IMR-90 (cell line): ENCODE measurements at regions of chr19 and their contacts with region 1.

Region 1: DNA sequence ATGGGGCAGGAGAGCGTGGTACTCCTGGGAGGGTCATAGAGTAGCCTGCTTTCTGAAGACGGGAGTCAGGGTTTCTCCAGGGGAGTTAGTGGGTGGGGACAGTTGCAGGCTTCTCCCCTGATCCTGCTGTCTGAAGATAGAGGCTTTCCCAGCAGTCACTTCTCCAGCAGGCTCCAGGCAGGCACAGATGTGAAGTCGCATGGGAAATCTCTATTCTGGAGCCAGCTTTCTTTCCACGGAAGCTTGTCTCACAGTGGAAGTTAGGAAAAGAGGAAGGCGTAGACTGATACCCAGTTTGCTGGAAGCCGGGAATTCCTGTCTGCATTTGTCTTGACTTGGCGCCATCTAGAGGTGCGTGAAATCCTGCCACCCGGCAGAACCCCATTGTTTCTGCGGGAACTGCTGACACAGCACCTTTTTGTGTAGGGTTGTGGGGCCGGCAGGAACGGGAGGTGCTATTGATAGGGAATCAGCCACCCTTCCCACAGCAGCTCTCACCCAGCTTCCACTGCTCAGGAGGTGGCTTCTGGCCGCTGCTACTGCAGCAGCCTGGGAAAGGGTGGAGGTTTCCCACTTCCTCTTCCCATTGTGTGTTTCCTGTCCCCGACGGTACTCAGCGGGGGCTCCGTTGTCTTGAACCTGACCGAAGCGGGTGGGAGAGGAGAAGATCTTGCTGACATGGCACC is 28.5 kb upstream of the NPAS1 start:
- DNase-seq: peak; percentile 81
- ATAC-seq: peak; percentile 95
- H3K4me3 ChIP-seq: no peak overlapping the region
- H3K27ac ChIP-seq: no peak overlapping the region
- H3K4me1 ChIP-seq: no peaks in the 10 kb centered on the region
- H3K27me3 ChIP-seq: no peaks in the 10 kb centered on the region
- CTCF ChIP-seq: peak; percentile 95
- POLR2A ChIP-seq: no peak
- RAD21 ChIP-seq: peak; percentile 98

Region 2: DNA sequence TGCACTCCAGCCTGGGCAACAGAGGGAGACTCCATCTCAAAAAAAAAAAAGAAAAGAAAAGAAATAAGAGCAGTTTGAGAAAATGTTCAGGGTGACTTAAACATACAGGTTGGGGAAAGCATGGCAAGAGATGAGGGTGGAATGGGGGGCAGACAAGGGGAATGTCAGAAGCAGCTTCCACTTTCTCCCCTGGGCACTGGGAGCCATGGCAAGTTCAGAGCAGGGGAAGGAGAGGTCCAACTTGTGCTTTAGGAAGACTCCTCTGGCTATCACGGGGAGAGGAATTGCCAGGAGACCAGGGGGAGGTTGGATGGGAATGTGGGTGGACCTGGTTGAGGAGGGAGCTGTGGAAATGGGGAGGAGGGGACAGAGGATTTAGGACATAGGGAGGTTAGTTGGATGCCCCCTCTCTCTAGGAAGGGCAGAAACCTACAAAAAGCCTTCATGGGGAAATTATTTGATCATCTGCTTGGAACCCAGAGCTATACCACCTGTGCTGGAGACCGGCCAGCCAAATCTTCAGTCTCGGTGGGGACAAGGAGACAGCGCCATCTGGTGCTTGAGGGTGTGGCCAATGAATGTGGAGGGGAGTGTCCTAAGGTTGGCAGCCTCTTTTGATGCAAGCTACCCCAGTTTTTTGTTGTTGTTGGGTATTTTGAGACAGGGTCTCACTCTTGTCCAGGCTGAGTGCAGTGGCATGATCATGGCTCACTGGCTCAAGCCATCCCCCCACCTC is 237.5 kb before region 1 on chr19:
- CTCF ChIA-PET with region 1: interaction called, 4 read pairs
- POLR2A ChIA-PET with region 1: no interaction called
- dilution Hi-C with region 1: no loop called
- in situ Hi-C with region 1: loop called (anchors 5 kb)
- intact Hi-C with region 1: loop called (anchors 2 kb)
- DNase-seq: no peak
- ATAC-seq: no peak
- H3K4me3 ChIP-seq: no peak overlapping the region
- H3K27ac ChIP-seq: no peak overlapping the region
- H3K4me1 ChIP-seq: peaks cover 8% of the 10 kb centered on the region
- H3K27me3 ChIP-seq: no peaks in the 10 kb centered on the region
- CTCF ChIP-seq: peak; percentile 40
- POLR2A ChIP-seq: no peak
- RAD21 ChIP-seq: peak; percentile 25; the same call in 1 of the 2 replicates

Region 3: GRCh38 chr19:46788262-46788967 is 202.7 kb before region 1 on chr19 and contains the start of gene SLC1A5:
- CTCF ChIA-PET with region 1: interaction called, 5 read pairs
- POLR2A ChIA-PET with region 1: no interaction called
- dilution Hi-C with region 1: no loop called
- in situ Hi-C with region 1: no loop called
- intact Hi-C with region 1: loop called (anchors 1 kb)
- DNase-seq: peak; percentile 96
- ATAC-seq: peak; percentile 76
- H3K4me3 ChIP-seq: peak within 1 kb of the TSS; percentile 97
- H3K27ac ChIP-seq: peak within 1 kb of the TSS; percentile 84
- H3K4me1 ChIP-seq: peaks cover 14% of the 10 kb centered on the region
- H3K27me3 ChIP-seq: no peaks in the 10 kb centered on the region
- CTCF ChIP-seq: no peak
- POLR2A ChIP-seq: peak; percentile 100
- RAD21 ChIP-seq: no peak
- total RNA-seq, gene SLC1A5: 105 and 142 TPM in 2 replicates

Region 4: DNA sequence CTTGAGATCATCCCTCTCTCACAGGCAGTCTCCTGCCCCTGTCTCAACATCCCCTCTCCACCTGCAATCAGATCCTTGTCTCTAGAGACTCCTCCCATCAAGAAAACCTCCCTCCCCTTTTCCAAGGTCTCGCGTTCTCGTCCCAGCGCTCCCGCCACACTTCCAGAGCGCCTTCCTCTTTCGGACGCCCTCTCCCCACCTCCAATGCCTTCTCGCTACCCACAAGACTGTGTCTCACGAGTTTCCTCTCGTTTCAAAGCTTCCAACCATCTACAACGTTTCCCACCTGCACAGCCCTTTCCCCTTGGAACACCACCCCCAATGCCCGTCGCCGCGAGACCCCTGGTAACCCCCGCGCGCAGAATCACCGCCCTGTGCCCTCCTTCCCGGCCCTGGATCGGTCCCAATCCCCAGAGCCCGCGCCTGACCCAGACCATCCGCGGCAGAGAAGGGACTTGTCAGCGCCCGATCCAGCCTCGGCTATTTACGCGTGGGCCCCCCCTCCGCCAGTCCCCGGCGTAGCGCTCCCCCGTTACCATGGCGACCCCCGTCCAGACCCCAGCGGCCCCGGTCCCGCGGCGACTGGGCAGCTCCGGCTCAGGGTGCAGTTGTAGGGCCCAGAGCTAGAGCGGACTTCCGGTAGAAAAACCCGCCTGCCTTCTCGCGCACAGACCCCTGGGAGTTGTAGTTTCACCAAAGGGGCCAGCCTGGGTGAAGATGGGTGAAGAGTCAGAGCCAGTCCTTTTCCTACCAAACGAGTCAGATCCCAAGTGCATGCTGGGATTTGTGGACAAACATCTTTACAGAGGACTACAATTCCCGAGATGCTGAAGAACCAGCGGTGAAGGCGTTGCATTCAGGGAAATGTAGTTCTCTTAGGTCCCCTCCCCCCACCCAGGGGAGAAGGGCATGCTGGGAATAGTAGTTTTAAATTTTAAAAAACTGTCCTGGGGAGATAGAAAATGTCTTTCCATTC is 140.6 kb before region 1 on chr19 and contains the start of gene AP2S1:
- CTCF ChIA-PET with region 1: interaction called, 14 read pairs
- POLR2A ChIA-PET with region 1: no interaction called
- dilution Hi-C with region 1: no loop called
- in situ Hi-C with region 1: loop called (anchors 5 kb)
- intact Hi-C with region 1: loop called (anchors 1 kb)
- DNase-seq: peak; percentile 99
- ATAC-seq: peak; percentile 93
- H3K4me3 ChIP-seq: peak within 1 kb of the TSS; percentile 76
- H3K27ac ChIP-seq: peak within 1 kb of the TSS; percentile 88
- H3K4me1 ChIP-seq: no peaks in the 10 kb centered on the region
- H3K27me3 ChIP-seq: no peaks in the 10 kb centered on the region
- CTCF ChIP-seq: no peak
- POLR2A ChIP-seq: peak; percentile 90
- RAD21 ChIP-seq: no peak
- total RNA-seq, gene AP2S1: 134 and 144 TPM in 2 replicates

Region 5: GRCh38 chr19:46860125-46860845 is 130.8 kb before region 1 on chr19:
- CTCF ChIA-PET with region 1: interaction called, 14 read pairs
- POLR2A ChIA-PET with region 1: no interaction called
- dilution Hi-C with region 1: no loop called
- in situ Hi-C with region 1: no loop called
- intact Hi-C with region 1: loop called (anchors 1 kb)
- DNase-seq: peak; percentile 98
- ATAC-seq: peak; percentile 75
- H3K4me3 ChIP-seq: peak overlapping the region; percentile 68
- H3K27ac ChIP-seq: peak overlapping the region; percentile 92
- H3K4me1 ChIP-seq: peaks cover 16% of the 10 kb centered on the region
- H3K27me3 ChIP-seq: no peaks in the 10 kb centered on the region
- CTCF ChIP-seq: no peak
- POLR2A ChIP-seq: peak; percentile 80
- RAD21 ChIP-seq: no peak